Lower leg skin (tissue), 4 donors: ENCODE measurements at regions of chr6 and their contacts with region 1.

Region 1: GRCh38 chr6:77430504-77430903 is 32.8 kb downstream of the HTR1B start:
- DNase-seq: no peak
- H3K4me3 ChIP-seq: no peak overlapping the region
- CTCF ChIP-seq: no peak
- POLR2A ChIP-seq: no peak

Region 2: GRCh38 chr6:76639941-76640340 is 790.6 kb before region 1 on chr6:
- intact Hi-C with region 1: no loop called
- DNase-seq: no peak
- H3K4me3 ChIP-seq: no peak overlapping the region
- CTCF ChIP-seq: no peak
- POLR2A ChIP-seq: no peak

Region 3: GRCh38 chr6:77609106-77609505 is 178.6 kb after region 1 on chr6:
- intact Hi-C with region 1: no loop called
- DNase-seq: no peak
- H3K4me3 ChIP-seq: no peak overlapping the region
- CTCF ChIP-seq: no peak
- POLR2A ChIP-seq: no peak

Region 4: GRCh38 chr6:79034865-79035264 is 1604.4 kb after region 1 on chr6:
- intact Hi-C with region 1: loop called (anchors 5 kb)
- DNase-seq: no peak
- H3K4me3 ChIP-seq: no peak overlapping the region
- CTCF ChIP-seq: no peak
- POLR2A ChIP-seq: no peak